Adrenal gland (tissue), 19 donors: ENCODE measurements at regions of chr1 and their contacts with region 1.

Region 1: DNA sequence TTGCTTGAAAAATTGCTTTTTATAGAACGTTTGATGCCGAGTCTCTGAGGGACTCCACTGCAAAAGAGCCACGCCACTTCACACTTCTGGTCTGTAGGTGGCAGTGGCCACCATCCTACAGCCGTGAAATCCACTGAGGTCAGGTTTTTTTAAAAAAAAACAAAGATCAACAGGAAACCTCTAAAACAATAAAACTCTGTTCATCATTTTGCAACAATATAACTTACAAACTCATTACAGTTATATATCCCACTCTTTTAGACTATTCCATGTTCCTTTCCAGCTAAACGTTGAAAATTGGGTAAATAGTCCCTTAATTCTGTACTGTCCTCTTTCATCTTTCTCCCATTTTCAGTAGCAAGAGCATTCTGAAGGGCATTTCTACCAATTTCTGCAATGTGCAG is 64.6 kb upstream of the FMN2 start:
- DNase-seq: peak; percentile 21 to 78 (median 54)
- H3K4me3 ChIP-seq: no peak overlapping the region
- H3K27ac ChIP-seq: no peak overlapping the region
- H3K4me1 ChIP-seq: no peaks in the 10 kb centered on the region
- H3K27me3 ChIP-seq: no peaks in the 10 kb centered on the region
- CTCF ChIP-seq: peak; percentile 69 to 96 (median 80)
- POLR2A ChIP-seq: no peak

Region 2: DNA sequence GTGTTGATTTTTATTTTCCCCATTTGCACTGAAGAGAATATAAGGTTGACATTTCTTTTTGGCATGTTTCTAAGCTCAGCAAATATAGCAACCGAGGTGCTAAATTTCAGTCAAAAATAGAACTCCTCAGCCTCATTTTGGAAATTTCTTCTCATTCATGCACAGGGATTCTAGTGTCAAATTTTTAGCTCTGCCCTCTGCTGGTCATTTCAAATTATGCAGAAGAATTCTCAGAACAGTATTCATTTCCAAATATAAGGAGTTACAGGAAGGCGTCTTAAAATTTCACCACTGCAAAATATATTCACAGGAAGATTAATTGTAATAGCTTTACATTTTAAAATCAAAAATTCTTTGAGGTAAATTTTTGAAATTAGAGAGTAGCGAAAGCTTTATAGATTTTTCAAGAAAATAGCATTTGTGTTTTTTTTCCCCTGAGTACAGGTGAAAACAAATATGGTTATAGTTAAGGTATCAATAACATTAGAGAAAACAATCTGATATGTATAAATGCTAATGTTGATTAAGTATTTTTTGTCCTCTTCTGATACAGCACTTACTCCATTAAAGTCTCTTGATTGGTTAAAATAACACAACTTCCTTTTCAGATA is 122.5 kb after region 1 on chr1:
- intact Hi-C with region 1: loop called (anchors 5 to 10 kb)
- DNase-seq: no peak
- H3K4me3 ChIP-seq: no peak overlapping the region
- H3K27ac ChIP-seq: no peak overlapping the region
- H3K4me1 ChIP-seq: no peaks in the 10 kb centered on the region
- H3K27me3 ChIP-seq: no peaks in the 10 kb centered on the region
- CTCF ChIP-seq: peak in 5 of 6 experiments; percentile 25 to 74 (median 58)
- POLR2A ChIP-seq: no peak